Activated CD8-positive, alpha-beta T cell treated with anti-CD3 and anti-CD28 coated beads, Interleukin-2, amount 10 ng/mL, durations not matched to agents 7 days and 5 days (primary cell): ENCODE measurements at regions of chr17 and their contacts with region 1.

Region 1: DNA sequence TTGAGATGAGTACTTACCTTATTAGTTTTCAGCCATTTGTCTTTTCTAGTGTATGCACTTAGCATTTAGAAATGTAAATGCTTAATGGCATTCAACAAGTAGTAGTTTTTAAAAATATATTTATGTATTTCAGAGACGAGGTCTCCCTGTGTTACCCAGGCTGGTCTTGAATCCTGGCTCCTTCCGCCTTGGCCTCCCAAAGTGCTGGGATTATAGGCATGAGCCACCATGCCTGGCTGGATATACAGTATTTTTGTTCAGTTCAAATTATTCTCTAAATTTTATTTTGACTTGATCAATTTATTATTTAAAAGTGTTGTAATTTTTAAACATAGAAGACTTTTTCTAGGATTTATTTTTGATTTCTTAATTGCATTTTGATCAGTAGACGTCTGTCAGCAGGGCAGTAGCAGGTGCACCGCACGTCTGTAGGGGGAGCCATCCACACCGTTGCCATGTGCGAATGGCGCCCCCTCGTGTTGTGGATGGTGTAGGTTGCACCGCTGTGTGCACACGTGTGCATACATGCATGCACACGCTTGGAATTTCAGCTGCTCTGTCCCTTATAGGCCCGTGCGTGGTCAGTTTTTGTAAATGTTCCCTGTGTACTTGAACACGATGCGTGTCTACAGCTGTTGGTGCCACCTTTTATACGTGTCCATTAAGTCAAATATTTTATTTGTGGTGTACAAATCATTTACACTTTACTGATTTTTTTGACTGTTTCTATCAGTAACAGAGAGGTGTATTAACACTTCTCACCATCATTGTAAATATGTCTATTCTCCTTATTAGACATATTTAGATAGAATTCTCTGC is 30.6 kb downstream of the RPTOR start:
- DNase-seq: peak; percentile 94
- ATAC-seq: peak; percentile 100
- H3K4me3 Mint-ChIP-seq: no peak overlapping the region
- H3K27ac Mint-ChIP-seq: no peak overlapping the region
- H3K4me1 Mint-ChIP-seq: peaks cover 18% of the 10 kb centered on the region
- H3K27me3 Mint-ChIP-seq: no peaks in the 10 kb centered on the region

Region 2: DNA sequence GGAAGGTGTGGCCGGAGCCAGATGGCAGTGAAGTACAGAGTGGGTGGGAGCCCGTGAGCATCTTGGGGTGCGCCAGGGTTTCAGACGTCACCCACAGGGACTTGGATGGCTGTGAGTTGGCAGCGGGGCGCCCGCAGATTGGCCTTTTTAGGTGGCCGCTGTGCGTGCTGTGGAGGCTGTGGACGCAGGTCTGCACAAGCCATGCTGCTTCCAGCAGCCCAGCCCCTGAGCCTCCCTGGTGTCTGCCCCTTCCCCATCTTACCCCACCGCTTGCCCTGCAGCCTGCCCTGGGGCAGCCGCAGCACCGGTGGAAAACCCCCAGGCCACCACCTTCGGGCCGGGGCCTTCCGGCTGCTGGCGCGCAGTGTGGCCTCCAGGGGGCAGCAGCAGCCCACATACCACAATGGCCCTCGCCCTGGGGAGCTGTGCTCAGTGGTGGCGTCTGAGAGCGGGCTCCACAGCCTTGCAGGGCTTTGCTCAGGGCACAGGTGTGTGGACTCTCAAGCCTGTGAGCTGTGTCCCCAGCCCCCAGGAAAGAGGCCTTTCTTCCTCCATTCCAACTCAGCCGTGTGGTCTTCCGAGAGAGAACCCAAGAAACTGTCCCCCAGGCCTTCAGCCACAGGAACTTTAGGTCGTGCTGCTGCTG is 148.5 kb before region 1 on chr17:
- CTCF ChIA-PET with region 1: interaction called, 14 read pairs
- POLR2A ChIA-PET with region 1: no interaction called
- DNase-seq: peak; percentile 89
- ATAC-seq: peak; percentile 98
- H3K4me3 Mint-ChIP-seq: no peak overlapping the region
- H3K27ac Mint-ChIP-seq: no peak overlapping the region
- H3K4me1 Mint-ChIP-seq: peaks cover 27% of the 10 kb centered on the region
- H3K27me3 Mint-ChIP-seq: no peaks in the 10 kb centered on the region

Region 3: DNA sequence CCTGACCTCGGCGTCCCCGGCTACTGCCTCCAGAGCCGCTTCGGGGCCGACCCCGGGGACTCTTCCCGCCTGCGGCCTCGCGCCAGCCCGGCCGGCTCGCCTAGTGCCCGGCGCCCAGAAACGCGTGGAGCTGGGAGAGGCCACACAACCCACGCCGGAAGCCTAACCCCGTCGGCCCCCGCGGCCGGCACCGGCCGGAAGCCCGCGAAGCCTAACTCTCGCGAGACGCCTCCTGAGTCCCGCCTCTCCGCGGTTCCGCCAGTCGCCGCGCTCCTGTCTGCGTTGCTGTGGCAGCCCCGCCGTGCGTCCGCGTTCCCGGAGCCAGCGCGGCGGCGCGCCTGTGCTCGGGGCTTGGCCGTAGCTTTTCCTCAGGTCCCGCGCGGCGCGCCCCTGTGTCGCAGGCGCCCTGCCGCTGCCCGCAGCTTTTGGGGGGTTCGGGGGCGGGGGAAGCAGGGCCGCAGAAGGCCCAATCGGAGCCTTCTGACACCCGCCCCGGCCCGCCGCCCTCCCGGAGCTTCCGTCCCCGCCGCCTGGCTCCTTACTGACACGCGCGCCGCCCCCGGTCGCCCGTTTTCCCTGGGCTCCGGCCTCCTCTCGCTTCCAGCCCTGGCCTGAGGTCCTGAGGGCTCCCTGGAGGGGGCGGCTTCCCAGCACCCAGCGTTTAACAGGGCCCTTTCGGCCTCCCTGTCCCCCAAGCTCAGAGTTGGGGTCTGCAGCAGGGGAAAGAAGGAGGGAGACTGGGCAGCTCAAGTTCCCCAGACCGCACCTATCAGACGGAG is 120.5 kb before region 1 on chr17:
- CTCF ChIA-PET with region 1: interaction called, 10 read pairs
- POLR2A ChIA-PET with region 1: interaction called, 4 read pairs
- DNase-seq: peak; percentile 97
- ATAC-seq: peak; percentile 95
- H3K4me3 Mint-ChIP-seq: peak overlapping the region; percentile 94
- H3K27ac Mint-ChIP-seq: peak overlapping the region; percentile 95
- H3K4me1 Mint-ChIP-seq: peaks cover 50% of the 10 kb centered on the region
- H3K27me3 Mint-ChIP-seq: peaks cover 16% of the 10 kb centered on the region

Region 4: GRCh38 chr17:80498242-80498919 is 76.9 kb before region 1 on chr17:
- CTCF ChIA-PET with region 1: no interaction called
- POLR2A ChIA-PET with region 1: no interaction called
- DNase-seq: no peak
- ATAC-seq: no peak
- H3K4me3 Mint-ChIP-seq: no peak overlapping the region
- H3K27ac Mint-ChIP-seq: no peak overlapping the region
- H3K4me1 Mint-ChIP-seq: peaks cover 10% of the 10 kb centered on the region
- H3K27me3 Mint-ChIP-seq: peaks cover 12% of the 10 kb centered on the region

Region 5: DNA sequence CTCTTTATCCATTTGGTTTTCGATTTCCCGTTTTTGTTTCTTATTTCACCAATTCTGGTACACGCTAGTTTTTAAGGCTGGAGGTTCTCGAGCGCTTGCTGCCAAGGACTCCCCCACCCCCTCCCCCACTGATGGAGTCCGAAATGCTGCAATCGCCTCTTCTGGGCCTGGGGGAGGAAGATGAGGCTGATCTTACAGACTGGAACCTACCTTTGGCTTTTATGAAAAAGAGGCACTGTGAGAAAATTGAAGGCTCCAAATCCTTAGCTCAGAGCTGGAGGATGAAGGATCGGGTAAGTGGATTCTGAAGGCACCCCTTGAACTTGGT is 29.8 kb before region 1 on chr17:
- CTCF ChIA-PET with region 1: interaction called, 11 read pairs
- POLR2A ChIA-PET with region 1: interaction called, 4 read pairs
- DNase-seq: no peak
- ATAC-seq: no peak
- H3K4me3 Mint-ChIP-seq: peak overlapping the region; percentile 91
- H3K27ac Mint-ChIP-seq: peak overlapping the region; percentile 93
- H3K4me1 Mint-ChIP-seq: peaks cover 32% of the 10 kb centered on the region
- H3K27me3 Mint-ChIP-seq: no peaks in the 10 kb centered on the region

Region 6: DNA sequence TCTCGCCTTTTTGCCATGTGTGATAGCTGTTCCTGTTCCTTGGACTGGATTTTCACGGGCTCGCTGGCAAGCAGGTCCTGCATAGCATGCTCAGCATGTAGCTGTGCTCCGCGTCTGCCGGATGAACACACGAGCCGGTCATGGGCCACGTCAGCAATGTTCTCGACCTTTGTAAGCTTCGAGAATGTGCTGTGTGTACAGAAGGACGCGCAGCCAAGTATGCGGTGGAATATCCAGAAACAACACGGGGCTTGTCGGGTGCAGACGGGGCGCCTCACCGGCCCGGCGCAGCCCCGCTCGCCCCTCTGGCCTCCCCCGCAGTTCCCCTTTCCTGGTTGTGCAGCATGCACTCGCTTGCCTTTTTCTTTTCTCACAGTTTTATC is 11.6 kb after region 1 on chr17:
- CTCF ChIA-PET with region 1: interaction called, 17 read pairs
- POLR2A ChIA-PET with region 1: no interaction called
- DNase-seq: no peak
- ATAC-seq: no peak
- H3K4me3 Mint-ChIP-seq: no peak overlapping the region
- H3K27ac Mint-ChIP-seq: peak overlapping the region; percentile 66
- H3K4me1 Mint-ChIP-seq: peaks cover 47% of the 10 kb centered on the region
- H3K27me3 Mint-ChIP-seq: no peaks in the 10 kb centered on the region

Region 7: DNA sequence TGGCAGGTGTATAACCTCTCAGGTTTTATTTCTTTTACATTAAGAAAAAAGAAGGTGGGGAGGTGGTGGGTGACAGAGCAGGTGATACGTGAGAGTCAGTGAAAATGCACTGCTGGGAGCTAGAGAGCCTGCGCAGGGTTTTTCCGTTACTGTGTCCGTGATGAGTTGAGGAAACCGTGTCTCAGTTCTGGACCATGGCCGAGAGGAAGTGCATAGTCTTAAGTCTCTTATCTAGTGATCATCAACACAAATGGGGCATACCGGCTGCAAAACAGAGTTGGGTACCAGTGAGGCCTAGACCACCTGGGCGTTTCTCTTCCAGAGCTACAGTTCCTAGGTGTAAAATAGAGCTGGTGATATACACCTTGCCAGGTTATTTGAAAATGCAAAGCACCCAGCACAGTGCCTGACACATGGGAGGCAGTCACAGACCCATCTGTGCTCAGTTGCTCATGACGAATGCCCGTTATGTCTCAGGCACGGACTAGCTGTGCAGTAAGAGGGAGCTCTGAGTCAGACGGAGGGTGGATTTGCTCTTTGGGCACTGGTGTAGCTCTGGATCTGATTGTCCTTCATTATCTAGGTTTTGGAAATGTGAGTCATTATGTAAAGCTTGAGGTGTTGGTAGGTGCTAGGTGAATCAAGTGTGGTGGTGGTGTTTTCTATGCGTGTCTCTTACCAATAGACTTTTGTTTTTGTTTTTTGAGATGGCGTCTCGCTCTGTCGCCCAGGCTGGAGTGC is 30.2 kb after region 1 on chr17:
- CTCF ChIA-PET with region 1: interaction called, 18 read pairs
- POLR2A ChIA-PET with region 1: no interaction called
- DNase-seq: no peak
- ATAC-seq: peak; percentile 53
- H3K4me3 Mint-ChIP-seq: no peak overlapping the region
- H3K27ac Mint-ChIP-seq: no peak overlapping the region
- H3K4me1 Mint-ChIP-seq: peaks cover 57% of the 10 kb centered on the region
- H3K27me3 Mint-ChIP-seq: no peaks in the 10 kb centered on the region

Region 8: DNA sequence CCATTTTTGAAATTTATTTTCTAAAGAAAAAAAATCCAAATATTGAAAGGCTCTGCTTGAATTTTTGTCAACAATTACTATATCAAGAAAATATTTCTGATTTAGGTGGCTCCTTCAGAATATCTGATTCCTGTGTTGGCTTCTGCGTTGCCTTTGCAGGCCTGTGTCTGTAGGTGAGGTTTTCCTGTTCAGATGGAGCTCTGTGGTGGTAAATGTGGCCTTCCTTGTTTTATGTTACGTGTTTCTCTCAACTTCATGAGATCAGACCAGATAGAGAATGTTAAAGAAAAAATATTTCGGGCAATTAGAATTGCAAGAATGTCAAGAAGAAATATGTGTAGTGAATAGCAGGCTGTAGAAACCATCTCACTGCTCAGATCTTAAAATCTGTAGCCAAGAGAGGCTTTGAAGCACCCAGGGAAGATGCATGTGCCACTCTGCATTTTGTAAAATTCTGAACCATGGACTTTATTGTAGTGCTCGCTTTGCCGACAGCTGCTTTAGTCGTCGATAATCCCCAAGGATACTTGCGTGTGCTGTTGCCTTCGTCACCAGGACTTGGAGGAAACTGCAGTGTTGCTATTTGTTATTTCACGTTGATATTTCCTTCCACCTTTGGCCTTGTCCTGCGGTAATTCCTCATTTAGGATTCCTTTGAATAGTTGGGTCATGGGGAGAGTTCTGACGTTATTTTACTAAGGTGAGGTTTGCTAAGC is 39.2 kb after region 1 on chr17:
- CTCF ChIA-PET with region 1: interaction called, 11 read pairs
- POLR2A ChIA-PET with region 1: no interaction called
- DNase-seq: no peak
- ATAC-seq: peak; percentile 71
- H3K4me3 Mint-ChIP-seq: peak overlapping the region; percentile 2
- H3K27ac Mint-ChIP-seq: peak overlapping the region; percentile 81
- H3K4me1 Mint-ChIP-seq: peaks cover 67% of the 10 kb centered on the region
- H3K27me3 Mint-ChIP-seq: no peaks in the 10 kb centered on the region

Region 9: GRCh38 chr17:81018044-81018802 is 443.0 kb after region 1 on chr17:
- CTCF ChIA-PET with region 1: no interaction called
- POLR2A ChIA-PET with region 1: no interaction called
- DNase-seq: peak; percentile 75
- ATAC-seq: peak; percentile 89
- H3K4me3 Mint-ChIP-seq: peak overlapping the region; percentile 74
- H3K27ac Mint-ChIP-seq: peak overlapping the region; percentile 94
- H3K4me1 Mint-ChIP-seq: peaks cover 52% of the 10 kb centered on the region
- H3K27me3 Mint-ChIP-seq: no peaks in the 10 kb centered on the region